ENCODE measurements at regions of chr1 and their contacts with region 1.

Region 1: GRCh38 chr1:204565617-204566582 is 49.7 kb downstream of the MDM4 start:
- DNase-seq: peak; percentile 85
- ATAC-seq: peak; percentile 75
- H3K4me3 ChIP-seq: no peak overlapping the region
- H3K4me3 Mint-ChIP-seq: peak overlapping the region; percentile 49
- H3K27ac ChIP-seq: peak overlapping the region; percentile 33 to 63
- H3K27ac Mint-ChIP-seq: peak overlapping the region; percentile 67
- H3K4me1 ChIP-seq: peaks cover 24 to 33% of the 10 kb centered on the region in 2 donors
- H3K4me1 Mint-ChIP-seq: peaks cover 43% of the 10 kb centered on the region
- H3K27me3 ChIP-seq: no peaks in the 10 kb centered on the region
- H3K27me3 Mint-ChIP-seq: no peaks in the 10 kb centered on the region
- CTCF ChIP-seq: peak; percentile 80

Region 2: DNA sequence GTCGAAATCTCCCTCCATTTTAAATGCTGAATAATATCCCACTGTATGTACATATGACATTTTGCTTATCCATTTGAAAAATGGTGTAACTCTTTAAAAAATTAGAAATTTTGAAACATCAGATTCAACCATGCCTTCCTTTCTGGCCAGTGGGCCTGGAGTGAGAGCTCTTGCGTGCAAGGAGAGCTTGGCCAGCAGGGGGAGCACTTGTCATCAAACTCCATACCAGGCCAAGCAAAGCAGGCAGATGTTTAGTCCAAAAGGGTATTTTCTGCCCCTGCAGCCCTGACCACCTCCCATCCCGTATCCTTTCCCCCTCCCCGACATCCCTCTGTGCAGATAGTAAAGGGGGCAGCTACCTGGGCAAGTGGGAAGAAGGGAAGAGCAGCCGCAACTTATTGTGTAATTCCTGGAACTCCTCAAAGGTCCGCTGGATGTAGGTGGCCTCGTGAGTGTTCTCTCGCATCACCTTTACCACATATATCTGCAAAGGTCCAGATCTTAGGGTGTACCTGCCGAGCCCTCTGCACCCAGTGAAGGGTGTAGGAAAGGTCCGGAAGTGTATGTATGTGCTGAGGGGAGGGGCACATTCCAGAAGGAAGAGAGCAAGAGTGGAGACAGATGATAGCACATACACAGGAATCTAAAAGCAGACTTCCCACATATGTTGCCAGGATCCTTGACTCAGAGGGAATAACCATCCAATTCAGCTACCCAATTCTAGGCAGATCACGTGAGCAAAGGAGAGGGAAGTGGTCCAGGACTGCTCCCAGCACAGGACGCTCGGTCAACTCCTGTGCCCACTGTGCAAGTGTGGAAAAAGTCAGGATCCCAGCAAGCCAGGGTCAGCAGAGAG is 134.4 kb before region 1 on chr1:
- CTCF ChIA-PET with region 1: interaction called, 15 read pairs
- POLR2A ChIA-PET with region 1: no interaction called
- intact Hi-C with region 1: no loop called
- DNase-seq: peak; percentile 84
- ATAC-seq: peak; percentile 77
- H3K4me3 ChIP-seq: no peak overlapping the region
- H3K4me3 Mint-ChIP-seq: no peak overlapping the region
- H3K27ac ChIP-seq: no peak overlapping the region
- H3K27ac Mint-ChIP-seq: peak overlapping the region; percentile 1
- H3K4me1 ChIP-seq: no peaks in the 10 kb centered on the region
- H3K4me1 Mint-ChIP-seq: no peaks in the 10 kb centered on the region
- H3K27me3 ChIP-seq: no peaks in the 10 kb centered on the region
- H3K27me3 Mint-ChIP-seq: no peaks in the 10 kb centered on the region
- CTCF ChIP-seq: peak; percentile 93

Region 3: DNA sequence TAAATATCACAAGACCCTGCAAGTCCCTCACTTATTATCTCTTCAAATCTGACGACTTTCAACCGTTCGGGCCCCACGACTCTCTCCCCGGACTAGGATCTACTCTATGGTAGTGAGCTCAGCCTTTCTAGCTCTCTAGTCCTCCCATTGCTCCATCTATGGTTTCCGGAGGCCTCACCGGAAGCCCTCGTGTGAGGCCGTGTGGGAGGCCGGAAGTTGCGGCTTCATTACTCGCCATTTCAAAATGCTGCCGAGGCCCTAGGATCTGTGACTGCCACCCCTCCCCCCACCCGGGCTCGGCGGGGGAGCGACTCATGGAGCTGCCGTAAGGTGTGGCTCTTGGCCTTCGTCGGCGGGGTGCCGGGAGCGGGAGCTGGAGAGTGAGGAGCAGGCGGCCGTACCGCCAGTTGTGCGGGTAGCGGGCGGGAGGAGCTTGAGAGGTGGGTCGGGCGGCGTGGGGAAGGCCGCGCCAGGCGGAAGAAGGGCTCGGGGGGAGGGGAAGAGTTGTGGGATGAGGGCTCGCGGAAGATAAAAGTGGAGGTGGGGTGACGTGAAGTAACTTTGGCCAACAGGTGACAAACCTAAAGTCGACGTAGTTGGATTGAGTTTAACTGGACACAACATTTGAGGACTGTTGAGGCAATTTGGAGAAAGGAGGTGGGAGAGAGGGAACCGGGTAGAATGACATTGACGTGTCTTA is 49.6 kb before region 1 on chr1 and contains the start of gene MDM4:
- CTCF ChIA-PET with region 1: interaction called, 7 read pairs
- POLR2A ChIA-PET with region 1: interaction called, 3 read pairs
- intact Hi-C with region 1: loop called (anchors 5 kb)
- DNase-seq: peak; percentile 97
- ATAC-seq: peak; percentile 78
- H3K4me3 ChIP-seq: peak within 1 kb of the TSS; percentile 75 to 96 (median 91)
- H3K4me3 Mint-ChIP-seq: no peak within 1 kb of the TSS
- H3K27ac ChIP-seq: peak within 1 kb of the TSS; percentile 95 to 97
- H3K27ac Mint-ChIP-seq: no peak within 1 kb of the TSS
- H3K4me1 ChIP-seq: peaks cover 83 to 92% of the 10 kb centered on the region in 2 donors
- H3K4me1 Mint-ChIP-seq: peaks cover 68% of the 10 kb centered on the region
- H3K27me3 ChIP-seq: no peaks in the 10 kb centered on the region
- H3K27me3 Mint-ChIP-seq: no peaks in the 10 kb centered on the region
- CTCF ChIP-seq: no peak
- total RNA-seq, gene MDM4: 374 and 378 TPM in 2 replicates

Region 4: DNA sequence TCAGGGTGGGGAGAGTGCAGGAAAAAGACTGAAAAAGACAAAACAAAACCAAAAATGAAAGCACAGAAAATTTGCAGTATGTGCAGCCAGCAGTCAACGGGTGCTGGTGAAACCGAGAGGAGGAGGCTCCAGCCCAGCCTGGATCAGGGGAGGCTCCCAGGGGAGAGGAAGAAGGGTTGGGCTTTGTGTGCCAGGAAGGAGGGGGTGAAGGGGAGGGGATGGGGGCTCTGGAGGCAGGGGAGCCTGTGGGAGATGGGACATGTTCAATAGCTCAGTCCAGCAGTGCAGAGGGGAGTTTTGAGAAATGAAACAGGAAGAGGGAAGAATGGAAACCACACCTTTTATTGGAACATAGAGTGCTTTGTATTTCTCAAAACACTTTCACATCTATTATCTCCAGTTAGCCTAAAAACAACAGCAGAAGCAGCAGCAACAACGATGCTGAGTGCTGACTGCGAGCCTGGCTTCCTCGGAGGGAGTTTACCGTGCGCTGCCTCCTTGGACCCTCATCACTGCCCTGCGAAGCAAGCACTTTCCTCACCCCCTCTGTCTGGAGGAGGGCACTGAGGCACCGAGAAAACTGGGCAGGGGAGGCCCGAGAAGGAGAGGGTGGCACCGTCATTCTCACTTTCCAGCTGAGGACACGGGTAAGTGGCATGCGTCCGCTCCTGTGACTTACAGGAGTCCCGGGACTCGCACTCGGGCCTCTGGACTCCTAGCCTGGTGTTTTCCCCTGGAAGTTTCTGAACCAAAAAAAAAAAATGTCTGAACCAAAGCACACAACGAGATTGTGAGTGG is 13.2 kb after region 1 on chr1:
- CTCF ChIA-PET with region 1: interaction called, 31 read pairs
- POLR2A ChIA-PET with region 1: interaction called, 3 read pairs
- intact Hi-C with region 1: no loop called
- DNase-seq: peak; percentile 60
- ATAC-seq: peak; percentile 73
- H3K4me3 ChIP-seq: peak overlapping the region in 4 of 5 experiments; percentile 41 to 68 (median 48)
- H3K4me3 Mint-ChIP-seq: peak overlapping the region; percentile 83
- H3K27ac ChIP-seq: peak overlapping the region; percentile 79 to 81
- H3K27ac Mint-ChIP-seq: peak overlapping the region; percentile 90
- H3K4me1 ChIP-seq: peaks cover 41 to 46% of the 10 kb centered on the region in 2 donors
- H3K4me1 Mint-ChIP-seq: peaks cover 50% of the 10 kb centered on the region
- H3K27me3 ChIP-seq: no peaks in the 10 kb centered on the region
- H3K27me3 Mint-ChIP-seq: no peaks in the 10 kb centered on the region
- CTCF ChIP-seq: no peak

Region 5: GRCh38 chr1:204746838-204747442 is 181.0 kb after region 1 on chr1:
- CTCF ChIA-PET with region 1: interaction called, 15 read pairs
- POLR2A ChIA-PET with region 1: no interaction called
- intact Hi-C with region 1: no loop called
- DNase-seq: peak; percentile 69
- ATAC-seq: peak; percentile 88
- H3K4me3 ChIP-seq: no peak overlapping the region
- H3K4me3 Mint-ChIP-seq: no peak overlapping the region
- H3K27ac ChIP-seq: no peak overlapping the region
- H3K27ac Mint-ChIP-seq: no peak overlapping the region
- H3K4me1 ChIP-seq: no peaks in the 10 kb centered on the region
- H3K4me1 Mint-ChIP-seq: no peaks in the 10 kb centered on the region
- H3K27me3 ChIP-seq: peaks cover 0 to 17% (median 1%) of the 10 kb centered on the region in 4 experiments
- H3K27me3 Mint-ChIP-seq: peaks cover 33% of the 10 kb centered on the region
- CTCF ChIP-seq: peak; percentile 96

Region 6: GRCh38 chr1:204791453-204792353 is 225.8 kb after region 1 on chr1:
- CTCF ChIA-PET with region 1: interaction called, 18 read pairs
- POLR2A ChIA-PET with region 1: no interaction called
- intact Hi-C with region 1: no loop called
- DNase-seq: peak; percentile 82
- ATAC-seq: peak; percentile 85
- H3K4me3 ChIP-seq: no peak overlapping the region
- H3K4me3 Mint-ChIP-seq: no peak overlapping the region
- H3K27ac ChIP-seq: no peak overlapping the region
- H3K27ac Mint-ChIP-seq: no peak overlapping the region
- H3K4me1 ChIP-seq: no peaks in the 10 kb centered on the region
- H3K4me1 Mint-ChIP-seq: peaks cover 2% of the 10 kb centered on the region
- H3K27me3 ChIP-seq: peaks cover 0 to 16% (median 8%) of the 10 kb centered on the region in 4 experiments
- H3K27me3 Mint-ChIP-seq: peaks cover 39% of the 10 kb centered on the region
- CTCF ChIP-seq: peak; percentile 96